ENCODE measurements at regions of chr13 and their contacts with region 1.

Region 1: GRCh38 chr13:110944121-110944967 is 29.5 kb upstream of the ANKRD10 start:
- DNase-seq: peak; percentile 38
- ATAC-seq: peak; percentile 89
- H3K4me3 ChIP-seq: no peak overlapping the region
- H3K27ac ChIP-seq: no peak overlapping the region
- H3K4me1 ChIP-seq: peaks cover 4% of the 10 kb centered on the region; the same call in 1 of the 2 replicates
- H3K27me3 ChIP-seq: no peaks in the 10 kb centered on the region
- CTCF ChIP-seq: peak; percentile 63

Region 2: GRCh38 chr13:111034811-111035210 is 90.5 kb after region 1 on chr13:
- CTCF ChIA-PET with region 1: interaction called, 13 read pairs
- POLR2A ChIA-PET with region 1: no interaction called
- in situ Hi-C with region 1: no loop called
- intact Hi-C with region 1: loop called (anchors 5 kb)
- DNase-seq: no peak
- ATAC-seq: no peak
- H3K4me3 ChIP-seq: no peak overlapping the region
- H3K27ac ChIP-seq: no peak overlapping the region
- H3K4me1 ChIP-seq: 0 out of 2 replicates have a peak, but pooled peaks cover 4% of the 10 kb centered on the region
- H3K27me3 ChIP-seq: peaks cover 7% of the 10 kb centered on the region; the same call in 1 of the 2 replicates
- CTCF ChIP-seq: no peak